Caco-2 (cell line): ENCODE measurements at regions of chr9 and their contacts with region 1.

Region 1: DNA sequence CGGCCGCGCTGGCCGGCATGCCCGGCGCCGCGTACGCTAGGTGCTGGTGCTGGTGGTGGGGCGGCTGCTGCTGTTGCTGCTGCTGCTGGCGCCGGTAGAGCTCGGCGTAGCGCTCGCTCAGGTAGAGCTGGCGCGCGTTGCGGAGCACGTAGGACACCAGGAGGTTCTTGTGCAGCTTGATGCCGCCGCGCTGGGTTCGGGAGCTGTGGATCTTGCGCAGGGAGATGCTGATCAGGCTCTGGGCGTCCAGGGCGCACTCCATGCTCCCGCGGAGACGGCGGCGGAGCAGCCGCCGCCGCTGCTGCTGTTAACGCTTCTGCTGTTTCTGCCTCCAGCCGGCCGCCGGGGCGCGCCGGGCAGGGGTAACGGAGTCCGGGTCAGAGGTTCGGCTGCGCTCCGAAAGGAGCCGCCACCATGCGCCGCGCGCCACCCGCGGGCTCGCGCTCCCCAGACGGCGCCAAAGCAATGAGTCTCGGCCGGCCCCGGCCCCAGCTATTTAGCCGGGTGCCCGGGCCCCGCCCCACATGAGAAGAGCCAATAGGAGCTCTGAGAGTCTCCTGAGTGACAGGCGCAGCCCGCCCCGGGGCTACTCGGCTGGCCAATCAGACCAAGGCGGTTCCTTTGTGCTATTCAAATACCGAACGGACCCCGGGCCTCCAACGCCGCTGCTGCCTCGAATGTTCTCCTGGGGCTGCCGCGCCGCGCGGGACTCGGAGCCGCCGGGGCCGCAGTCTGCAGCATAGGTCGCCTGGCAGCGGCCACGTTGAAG is at the start of gene IER5L:
- DNase-seq: peak; percentile 97
- H3K4me3 ChIP-seq: peak within 1 kb of the TSS; percentile 81
- H3K4me3 Mint-ChIP-seq: peak within 1 kb of the TSS; percentile 89
- H3K27ac Mint-ChIP-seq: peak within 1 kb of the TSS; percentile 30
- H3K4me1 ChIP-seq: peaks cover 49% of the 10 kb centered on the region
- H3K4me1 Mint-ChIP-seq: peaks cover 27% of the 10 kb centered on the region
- H3K27me3 ChIP-seq: no peaks in the 10 kb centered on the region
- H3K27me3 Mint-ChIP-seq: no peaks in the 10 kb centered on the region
- CTCF ChIP-seq: no peak
- total RNA-seq, gene IER5L: 3.9 and 4.1 TPM in 2 replicates

Region 2: GRCh38 chr9:129093421-129094204 is 84.4 kb before region 1 on chr9:
- CTCF ChIA-PET with region 1: no interaction called
- POLR2A ChIA-PET with region 1: no interaction called
- intact Hi-C with region 1: no loop called
- DNase-seq: no peak
- H3K4me3 ChIP-seq: no peak overlapping the region
- H3K4me3 Mint-ChIP-seq: no peak overlapping the region
- H3K27ac Mint-ChIP-seq: peak overlapping the region; percentile 28
- H3K4me1 ChIP-seq: no peaks in the 10 kb centered on the region
- H3K4me1 Mint-ChIP-seq: no peaks in the 10 kb centered on the region
- H3K27me3 ChIP-seq: no peaks in the 10 kb centered on the region
- H3K27me3 Mint-ChIP-seq: no peaks in the 10 kb centered on the region
- CTCF ChIP-seq: no peak

Region 3: GRCh38 chr9:129139993-129140396 is 38.0 kb before region 1 on chr9:
- CTCF ChIA-PET with region 1: interaction called, 23 read pairs
- POLR2A ChIA-PET with region 1: interaction called, 3 read pairs
- intact Hi-C with region 1: loop called (anchors 1 kb)
- DNase-seq: peak; percentile 41 to 85
- H3K4me3 ChIP-seq: peak overlapping the region; percentile 21
- H3K4me3 Mint-ChIP-seq: peak overlapping the region; percentile 64
- H3K27ac Mint-ChIP-seq: peak overlapping the region; percentile 95
- H3K4me1 ChIP-seq: peaks cover 51% of the 10 kb centered on the region
- H3K4me1 Mint-ChIP-seq: peaks cover 29% of the 10 kb centered on the region
- H3K27me3 ChIP-seq: no peaks in the 10 kb centered on the region
- H3K27me3 Mint-ChIP-seq: no peaks in the 10 kb centered on the region
- CTCF ChIP-seq: peak in 1 of 2 experiments; percentile 0

Region 4: DNA sequence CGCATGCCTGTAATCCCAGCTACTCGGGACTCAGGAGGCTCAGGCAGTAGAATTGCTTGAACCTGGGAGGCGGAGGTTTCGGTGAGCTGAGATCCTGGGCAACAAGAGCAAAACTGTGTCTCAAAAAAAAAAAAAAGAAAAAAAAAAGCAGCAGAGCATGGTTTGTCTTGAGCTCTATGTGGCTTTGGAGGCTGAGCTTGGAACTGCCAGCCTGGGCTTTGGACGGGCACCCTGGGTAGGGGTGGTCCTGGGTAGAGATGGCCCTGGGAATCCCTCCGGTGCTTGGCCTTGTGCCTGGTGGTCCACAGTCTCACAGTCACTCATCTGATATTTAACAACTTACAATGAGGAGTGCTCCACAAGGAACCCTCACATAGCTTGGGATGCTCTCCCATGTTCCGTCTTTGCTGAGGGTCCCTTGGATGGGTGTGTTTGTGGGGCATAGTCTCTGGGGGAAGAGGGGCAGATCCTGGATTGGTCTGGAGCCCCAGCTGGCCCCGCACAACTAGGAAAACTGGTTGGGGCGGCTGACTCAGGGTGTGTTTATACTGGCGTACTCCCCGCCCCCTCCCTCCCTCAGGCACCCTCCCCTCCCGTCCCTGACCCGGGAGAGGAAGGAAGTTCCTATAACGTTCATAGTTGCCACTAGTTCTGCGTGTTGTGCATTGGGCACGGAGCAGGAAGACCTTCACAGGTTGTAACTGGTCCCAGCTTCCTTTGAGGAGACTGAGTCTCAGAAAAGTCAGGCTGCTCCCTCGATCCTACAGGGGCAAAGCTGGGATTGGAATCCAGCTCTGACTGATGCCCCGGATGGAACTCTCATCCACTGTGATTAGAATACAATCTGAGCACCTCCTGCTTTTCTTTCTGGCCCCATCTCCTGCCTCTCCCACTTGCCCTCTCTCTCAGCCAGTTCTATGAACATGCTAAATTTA is 11.1 kb before region 1 on chr9:
- CTCF ChIA-PET with region 1: interaction called, 4 read pairs
- POLR2A ChIA-PET with region 1: interaction called, 10 read pairs
- intact Hi-C with region 1: no loop called
- DNase-seq: peak; percentile 87 to 89
- H3K4me3 ChIP-seq: peak overlapping the region; percentile 15
- H3K4me3 Mint-ChIP-seq: peak overlapping the region; percentile 66
- H3K27ac Mint-ChIP-seq: peak overlapping the region; percentile 71
- H3K4me1 ChIP-seq: peaks cover 18% of the 10 kb centered on the region
- H3K4me1 Mint-ChIP-seq: peaks cover 32% of the 10 kb centered on the region
- H3K27me3 ChIP-seq: no peaks in the 10 kb centered on the region
- H3K27me3 Mint-ChIP-seq: no peaks in the 10 kb centered on the region
- CTCF ChIP-seq: no peak

Region 5: GRCh38 chr9:129239946-129240490 is 62.0 kb after region 1 on chr9:
- CTCF ChIA-PET with region 1: no interaction called
- POLR2A ChIA-PET with region 1: no interaction called
- intact Hi-C with region 1: no loop called
- DNase-seq: no peak
- H3K4me3 ChIP-seq: no peak overlapping the region
- H3K4me3 Mint-ChIP-seq: no peak overlapping the region
- H3K27ac Mint-ChIP-seq: no peak overlapping the region
- H3K4me1 ChIP-seq: no peaks in the 10 kb centered on the region
- H3K4me1 Mint-ChIP-seq: no peaks in the 10 kb centered on the region
- H3K27me3 ChIP-seq: no peaks in the 10 kb centered on the region
- H3K27me3 Mint-ChIP-seq: no peaks in the 10 kb centered on the region
- CTCF ChIP-seq: no peak

Region 6: GRCh38 chr9:129333953-129334724 is 156.2 kb after region 1 on chr9:
- CTCF ChIA-PET with region 1: no interaction called
- POLR2A ChIA-PET with region 1: interaction called, 13 read pairs
- intact Hi-C with region 1: loop called (anchors 5 kb)
- DNase-seq: peak; percentile 97 to 99
- H3K4me3 ChIP-seq: peak overlapping the region; percentile 11
- H3K4me3 Mint-ChIP-seq: peak overlapping the region; percentile 68
- H3K27ac Mint-ChIP-seq: peak overlapping the region; percentile 98
- H3K4me1 ChIP-seq: peaks cover 27% of the 10 kb centered on the region
- H3K4me1 Mint-ChIP-seq: peaks cover 19% of the 10 kb centered on the region
- H3K27me3 ChIP-seq: no peaks in the 10 kb centered on the region
- H3K27me3 Mint-ChIP-seq: no peaks in the 10 kb centered on the region
- CTCF ChIP-seq: peak; percentile 22 to 31

Region 7: GRCh38 chr9:129487642-129488409 is 309.9 kb after region 1 on chr9:
- CTCF ChIA-PET with region 1: no interaction called
- POLR2A ChIA-PET with region 1: interaction called, 12 read pairs
- intact Hi-C with region 1: loop called (anchors 5 kb)
- DNase-seq: peak in 1 of 2 experiments; percentile 41
- H3K4me3 ChIP-seq: peak overlapping the region; percentile 36
- H3K4me3 Mint-ChIP-seq: peak overlapping the region; percentile 78
- H3K27ac Mint-ChIP-seq: peak overlapping the region; percentile 92
- H3K4me1 ChIP-seq: peaks cover 57% of the 10 kb centered on the region
- H3K4me1 Mint-ChIP-seq: peaks cover 52% of the 10 kb centered on the region
- H3K27me3 ChIP-seq: no peaks in the 10 kb centered on the region
- H3K27me3 Mint-ChIP-seq: no peaks in the 10 kb centered on the region
- CTCF ChIP-seq: no peak

Region 8: GRCh38 chr9:129610473-129611301 is 432.7 kb after region 1 on chr9:
- CTCF ChIA-PET with region 1: interaction called, 3 read pairs
- POLR2A ChIA-PET with region 1: interaction called, 3 read pairs
- intact Hi-C with region 1: loop called (anchors 10 kb)
- DNase-seq: peak; percentile 81 to 85
- H3K4me3 ChIP-seq: peak overlapping the region; percentile 67
- H3K4me3 Mint-ChIP-seq: peak overlapping the region; percentile 78
- H3K27ac Mint-ChIP-seq: peak overlapping the region; percentile 59
- H3K4me1 ChIP-seq: peaks cover 19% of the 10 kb centered on the region; the same call in 1 of the 2 replicates
- H3K4me1 Mint-ChIP-seq: peaks cover 9% of the 10 kb centered on the region
- H3K27me3 ChIP-seq: no peaks in the 10 kb centered on the region
- H3K27me3 Mint-ChIP-seq: no peaks in the 10 kb centered on the region
- CTCF ChIP-seq: peak; percentile 85 to 98